A673 (cell line): ENCODE measurements at regions of chr4 and their contacts with region 1.

Region 1: DNA sequence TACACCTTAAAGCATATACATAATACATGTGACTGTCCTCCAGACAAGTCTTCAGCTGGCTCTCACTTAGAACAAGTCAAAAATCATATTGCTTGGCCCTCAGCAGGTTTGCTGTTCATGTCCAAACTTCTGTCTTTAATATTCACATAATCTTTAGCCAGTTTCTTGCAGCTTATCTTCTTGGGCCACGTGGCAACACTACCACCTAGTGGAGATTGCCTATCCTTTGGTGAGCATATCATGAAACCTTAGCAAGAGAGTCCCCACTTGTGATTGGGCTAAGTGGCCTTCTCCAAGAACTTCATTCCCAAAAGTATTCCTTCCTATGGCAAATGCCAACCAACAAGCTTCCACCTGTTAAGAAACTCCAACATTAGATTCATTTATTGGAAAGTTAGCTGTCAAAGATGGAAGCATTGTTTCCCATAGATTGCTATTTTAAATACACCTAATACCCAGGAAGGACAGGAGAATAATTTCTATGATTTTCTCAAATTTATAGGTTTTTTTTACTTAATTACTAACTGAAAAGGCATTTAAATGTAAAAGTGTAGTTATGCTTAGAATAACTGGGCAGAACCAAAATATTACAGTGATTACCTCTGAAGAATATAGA is 231.9 kb upstream of the INTU start:
- DNase-seq: peak; percentile 87
- H3K4me3 ChIP-seq: no peak overlapping the region
- H3K27ac ChIP-seq: no peak overlapping the region
- H3K4me1 ChIP-seq: peaks cover 5% of the 10 kb centered on the region
- H3K27me3 ChIP-seq: no peaks in the 10 kb centered on the region
- CTCF ChIP-seq: peak; percentile 83

Region 2: GRCh38 chr4:127194281-127194680 is 206.6 kb before region 1 on chr4:
- CTCF ChIA-PET with region 1: no interaction called
- POLR2A ChIA-PET with region 1: no interaction called
- intact Hi-C with region 1: loop called (anchors 5 kb)
- DNase-seq: no peak
- H3K4me3 ChIP-seq: no peak overlapping the region
- H3K27ac ChIP-seq: no peak overlapping the region
- H3K4me1 ChIP-seq: no peaks in the 10 kb centered on the region
- H3K27me3 ChIP-seq: no peaks in the 10 kb centered on the region
- CTCF ChIP-seq: no peak